CD4-positive, alpha-beta T cell (primary cell): ENCODE measurements at regions of chr14 and their contacts with region 1.

Region 1: DNA sequence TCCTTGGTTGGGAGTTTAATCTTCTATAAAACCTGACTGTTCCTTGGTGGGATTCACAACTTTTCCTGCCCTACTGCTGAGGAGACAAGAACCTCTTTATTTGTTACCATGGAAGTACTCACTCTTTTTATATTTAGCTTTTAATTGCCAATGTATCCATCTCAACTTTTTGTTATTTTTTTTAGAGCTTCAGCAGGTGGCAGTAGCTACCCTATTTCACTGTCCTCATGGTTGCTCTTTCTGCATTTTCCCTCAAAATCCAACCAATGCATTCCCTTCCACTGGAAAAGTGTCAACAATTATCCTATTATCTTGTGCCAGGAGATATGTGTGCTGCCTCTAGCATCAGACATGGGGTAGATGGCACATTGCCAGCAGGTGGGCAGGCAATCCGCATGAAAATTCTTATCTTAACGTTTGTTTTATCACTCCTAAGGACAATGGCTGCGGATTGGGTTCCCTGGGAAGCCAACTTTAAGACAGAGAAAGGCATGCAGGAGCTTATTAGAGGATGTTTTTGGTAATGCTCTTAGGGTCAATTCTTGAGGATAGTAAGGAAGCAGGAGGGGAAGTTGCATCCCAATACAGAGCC is 406.4 kb downstream of the SNAPC1 start:
- DNase-seq: no peak
- ATAC-seq: no peak
- H3K4me3 ChIP-seq: no peak overlapping the region
- H3K4me3 Mint-ChIP-seq: no peak overlapping the region
- H3K27ac ChIP-seq: no peak overlapping the region
- H3K27ac Mint-ChIP-seq: no peak overlapping the region
- H3K4me1 ChIP-seq: no peaks in the 10 kb centered on the region
- H3K4me1 Mint-ChIP-seq: no peaks in the 10 kb centered on the region
- H3K27me3 ChIP-seq: peaks cover 0 to 5% of the 10 kb centered on the region in 2 experiments
- H3K27me3 Mint-ChIP-seq: peaks cover 39% of the 10 kb centered on the region
- CTCF ChIP-seq: no peak

Region 2: GRCh38 chr14:62234849-62235248 is 66.2 kb after region 1 on chr14:
- CTCF ChIA-PET with region 1: no interaction called
- POLR2A ChIA-PET with region 1: no interaction called
- intact Hi-C with region 1: loop called in 1 of 2 experiments (anchors 2 kb)
- DNase-seq: no peak
- ATAC-seq: no peak
- H3K4me3 ChIP-seq: no peak overlapping the region
- H3K4me3 Mint-ChIP-seq: no peak overlapping the region
- H3K27ac ChIP-seq: no peak overlapping the region
- H3K27ac Mint-ChIP-seq: no peak overlapping the region
- H3K4me1 ChIP-seq: no peaks in the 10 kb centered on the region
- H3K4me1 Mint-ChIP-seq: no peaks in the 10 kb centered on the region
- H3K27me3 ChIP-seq: peaks cover 0 to 5% of the 10 kb centered on the region in 2 experiments
- H3K27me3 Mint-ChIP-seq: peaks cover 4% of the 10 kb centered on the region
- CTCF ChIP-seq: no peak